A673 (cell line): ENCODE measurements at regions of chr17 and their contacts with region 1.

Region 1: DNA sequence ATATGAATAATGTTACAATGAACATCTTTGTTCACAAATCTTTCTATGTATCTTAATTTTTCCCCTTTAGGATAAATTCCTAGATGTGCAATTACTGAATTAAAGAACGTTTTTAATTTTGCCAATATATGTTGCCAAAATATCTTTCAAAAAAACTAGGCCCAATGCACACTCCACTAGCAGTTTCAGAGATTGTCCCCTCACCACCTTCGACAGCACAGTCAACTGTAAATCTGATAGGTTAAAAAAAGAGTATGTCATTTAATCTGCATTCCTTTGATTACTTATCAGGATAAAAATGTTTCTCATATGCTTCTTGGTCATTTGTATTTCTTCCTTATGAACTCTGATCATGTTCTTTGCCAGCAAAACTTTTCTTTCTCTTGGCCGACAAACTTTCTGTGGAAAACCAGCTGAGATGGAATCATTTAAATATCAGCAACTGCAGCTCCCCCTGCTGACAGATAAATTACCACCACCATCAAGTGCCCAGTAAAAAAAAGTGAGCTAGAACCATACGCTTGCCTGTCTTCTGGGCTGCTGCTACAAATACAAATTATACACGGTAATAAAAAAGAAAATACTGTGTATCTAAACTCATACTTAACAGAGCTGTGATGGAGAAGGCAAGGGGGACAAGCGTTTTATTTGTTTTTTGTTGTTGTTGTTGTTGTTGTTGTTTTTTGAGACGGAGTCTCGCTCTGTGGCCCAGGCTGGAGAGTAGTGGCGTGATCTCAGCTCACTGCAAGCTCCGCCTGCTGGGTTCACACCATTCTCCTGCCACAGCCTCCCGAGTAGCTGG is 19.6 kb upstream of the KANSL1 start:
- DNase-seq: peak; percentile 81
- H3K4me3 ChIP-seq: no peak overlapping the region
- H3K27ac ChIP-seq: no peak overlapping the region
- H3K4me1 ChIP-seq: no peaks in the 10 kb centered on the region
- H3K27me3 ChIP-seq: no peaks in the 10 kb centered on the region
- CTCF ChIP-seq: peak; percentile 86

Region 2: DNA sequence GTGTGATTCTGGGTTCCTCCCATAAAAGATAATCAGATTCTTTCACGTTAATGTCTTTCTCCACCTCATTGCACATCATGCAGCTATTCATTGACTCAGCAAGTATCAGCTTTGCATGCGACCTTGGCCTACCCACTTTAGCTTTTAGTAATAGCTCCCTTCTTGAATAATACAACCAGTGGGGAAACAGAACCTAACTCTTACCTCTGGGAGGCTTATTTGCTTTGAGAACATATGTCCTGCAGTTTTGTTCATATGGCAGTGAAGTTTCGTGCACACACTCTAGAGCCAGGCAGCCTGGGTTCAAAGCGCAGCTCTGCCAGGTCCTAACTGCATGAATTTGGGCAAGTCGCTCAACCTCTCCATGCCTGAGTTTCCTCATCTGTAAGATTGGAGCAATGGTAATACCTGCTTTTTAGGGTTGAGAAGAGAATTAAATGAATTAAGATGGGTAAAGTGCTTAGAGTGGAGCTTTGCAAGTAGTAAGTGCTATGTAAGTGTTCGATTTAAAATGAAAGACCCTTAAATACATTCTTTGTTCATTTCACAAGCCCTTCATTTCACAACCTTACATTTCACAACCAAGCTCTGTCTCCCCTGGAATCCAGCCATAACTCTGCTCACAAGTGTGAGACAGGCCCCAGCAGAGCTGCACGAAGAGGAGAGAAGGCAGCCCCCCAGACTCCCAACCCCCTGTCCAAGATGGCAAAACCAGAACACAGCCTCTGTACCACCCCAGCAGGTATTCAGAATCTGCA is 289.1 kb before region 1 on chr17:
- CTCF ChIA-PET with region 1: no interaction called
- POLR2A ChIA-PET with region 1: no interaction called
- intact Hi-C with region 1: no loop called
- DNase-seq: peak; percentile 26
- H3K4me3 ChIP-seq: no peak overlapping the region
- H3K27ac ChIP-seq: no peak overlapping the region
- H3K4me1 ChIP-seq: no peaks in the 10 kb centered on the region
- H3K27me3 ChIP-seq: no peaks in the 10 kb centered on the region
- CTCF ChIP-seq: no peak

Region 3: GRCh38 chr17:46002311-46002972 is 210.4 kb before region 1 on chr17:
- CTCF ChIA-PET with region 1: interaction called, 5 read pairs
- POLR2A ChIA-PET with region 1: no interaction called
- intact Hi-C with region 1: loop called (anchors 5 kb)
- DNase-seq: peak; percentile 50
- H3K4me3 ChIP-seq: no peak overlapping the region
- H3K27ac ChIP-seq: no peak overlapping the region
- H3K4me1 ChIP-seq: no peaks in the 10 kb centered on the region
- H3K27me3 ChIP-seq: no peaks in the 10 kb centered on the region
- CTCF ChIP-seq: peak; percentile 64

Region 4: GRCh38 chr17:46044286-46044928 is 168.4 kb before region 1 on chr17:
- CTCF ChIA-PET with region 1: interaction called, 10 read pairs
- POLR2A ChIA-PET with region 1: no interaction called
- intact Hi-C with region 1: loop called (anchors 2 kb)
- DNase-seq: peak; percentile 81
- H3K4me3 ChIP-seq: no peak overlapping the region
- H3K27ac ChIP-seq: no peak overlapping the region
- H3K4me1 ChIP-seq: no peaks in the 10 kb centered on the region
- H3K27me3 ChIP-seq: no peaks in the 10 kb centered on the region
- CTCF ChIP-seq: peak; percentile 74

Region 5: GRCh38 chr17:46167826-46168569 is 44.8 kb before region 1 on chr17:
- CTCF ChIA-PET with region 1: no interaction called
- POLR2A ChIA-PET with region 1: no interaction called
- intact Hi-C with region 1: no loop called
- DNase-seq: no peak
- H3K4me3 ChIP-seq: no peak overlapping the region
- H3K27ac ChIP-seq: peak overlapping the region; percentile 65
- H3K4me1 ChIP-seq: peaks cover 44% of the 10 kb centered on the region
- H3K27me3 ChIP-seq: no peaks in the 10 kb centered on the region
- CTCF ChIP-seq: no peak